ENCODE measurements at regions of chr1 and their contacts with region 1.

Region 1: GRCh38 chr1:169106095-169106920 is at the start of gene ATP1B1:
- DNase-seq: peak; percentile 88
- H3K4me3 ChIP-seq: peak within 1 kb of the TSS; percentile 84 to 89 (median 88)
- H3K27ac ChIP-seq: peak within 1 kb of the TSS; percentile 98
- H3K4me1 ChIP-seq: peaks cover 53% of the 10 kb centered on the region
- H3K27me3 ChIP-seq: no peaks in the 10 kb centered on the region
- CTCF ChIP-seq: peak in 1 of 2 donors; percentile 44
- total RNA-seq, gene ATP1B1: 53.2 to 117 TPM

Region 2: DNA sequence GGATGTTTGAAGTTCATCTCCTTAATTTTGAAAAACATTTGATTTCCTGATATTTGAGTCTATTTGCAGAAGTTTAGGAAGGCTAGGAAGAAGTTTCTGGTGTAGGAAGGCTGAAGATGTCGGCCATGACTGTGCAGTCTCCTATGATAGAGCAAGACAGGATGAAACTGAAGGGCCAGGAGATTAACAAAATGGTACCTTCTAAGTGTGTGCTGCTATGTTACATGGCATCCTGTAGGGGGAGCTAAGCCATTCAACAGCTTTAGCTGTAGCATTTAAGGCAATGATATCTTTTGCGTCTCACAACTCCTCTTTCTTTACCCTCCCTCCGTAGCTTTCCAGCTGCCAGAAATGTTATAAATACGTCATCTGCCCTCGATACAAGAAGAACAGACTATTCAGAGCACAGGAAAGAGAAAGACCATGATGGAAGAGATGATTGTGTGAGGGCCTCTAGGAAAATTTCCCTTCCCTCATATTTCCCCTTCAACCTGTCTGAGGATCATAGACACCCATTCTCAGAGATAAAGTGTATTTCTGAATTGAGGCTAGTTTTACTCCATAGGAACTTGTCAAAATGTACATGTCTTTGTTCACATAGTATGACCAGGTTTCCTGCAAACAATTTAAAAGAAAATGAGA is 468.8 kb before region 1 on chr1:
- CTCF ChIA-PET with region 1: interaction called, 3 read pairs
- dilution Hi-C with region 1: loop called (anchors 25 kb)
- in situ Hi-C with region 1: loop called in 1 of 2 experiments (anchors 10 kb)
- intact Hi-C with region 1: loop called (anchors 1 kb)
- DNase-seq: peak; percentile 39
- H3K4me3 ChIP-seq: no peak overlapping the region
- H3K27ac ChIP-seq: peak overlapping the region; percentile 95
- H3K4me1 ChIP-seq: peaks cover 26% of the 10 kb centered on the region
- H3K27me3 ChIP-seq: no peaks in the 10 kb centered on the region
- CTCF ChIP-seq: peak; percentile 79 to 84

Region 3: GRCh38 chr1:168939548-168940245 is 166.6 kb before region 1 on chr1:
- CTCF ChIA-PET with region 1: no interaction called
- dilution Hi-C with region 1: no loop called
- in situ Hi-C with region 1: no loop called
- intact Hi-C with region 1: no loop called
- DNase-seq: no peak
- H3K4me3 ChIP-seq: no peak overlapping the region
- H3K27ac ChIP-seq: no peak overlapping the region
- H3K4me1 ChIP-seq: no peaks in the 10 kb centered on the region
- H3K27me3 ChIP-seq: no peaks in the 10 kb centered on the region
- CTCF ChIP-seq: no peak

Region 4: GRCh38 chr1:169059421-169059820 is 46.9 kb before region 1 on chr1:
- CTCF ChIA-PET with region 1: no interaction called
- dilution Hi-C with region 1: loop called (anchors 5 kb)
- in situ Hi-C with region 1: no loop called
- intact Hi-C with region 1: no loop called
- DNase-seq: no peak
- H3K4me3 ChIP-seq: no peak overlapping the region
- H3K27ac ChIP-seq: no peak overlapping the region
- H3K4me1 ChIP-seq: no peaks in the 10 kb centered on the region
- H3K27me3 ChIP-seq: no peaks in the 10 kb centered on the region
- CTCF ChIP-seq: no peak

Region 5: GRCh38 chr1:169148472-169149252 is 42.4 kb after region 1 on chr1:
- CTCF ChIA-PET with region 1: no interaction called
- dilution Hi-C with region 1: no loop called
- in situ Hi-C with region 1: no loop called
- intact Hi-C with region 1: no loop called
- DNase-seq: no peak
- H3K4me3 ChIP-seq: no peak overlapping the region
- H3K27ac ChIP-seq: no peak overlapping the region
- H3K4me1 ChIP-seq: no peaks in the 10 kb centered on the region
- H3K27me3 ChIP-seq: no peaks in the 10 kb centered on the region
- CTCF ChIP-seq: no peak

Region 6: DNA sequence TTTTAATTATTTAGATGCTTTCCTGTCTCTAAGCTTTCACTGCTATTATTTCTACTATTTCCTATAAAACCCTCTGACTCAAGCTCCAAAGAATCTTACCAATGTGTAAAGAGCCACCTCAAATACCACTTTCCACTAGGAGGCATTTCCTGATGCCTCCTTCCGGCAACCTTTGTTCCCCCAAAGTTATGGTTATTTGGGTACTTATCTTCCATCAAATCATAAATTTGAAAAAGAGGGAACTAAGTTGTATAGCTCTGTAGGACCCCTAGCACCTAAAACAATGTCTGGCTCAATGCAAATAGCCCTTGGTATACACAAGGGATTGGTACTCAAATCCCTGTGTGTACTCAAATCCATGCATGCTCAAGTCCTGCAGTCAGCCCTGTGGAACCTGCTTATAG is 181.7 kb after region 1 on chr1:
- CTCF ChIA-PET with region 1: no interaction called
- dilution Hi-C with region 1: no loop called
- in situ Hi-C with region 1: no loop called
- intact Hi-C with region 1: no loop called
- DNase-seq: peak; percentile 42
- H3K4me3 ChIP-seq: no peak overlapping the region
- H3K27ac ChIP-seq: no peak overlapping the region
- H3K4me1 ChIP-seq: peaks cover 27% of the 10 kb centered on the region
- H3K27me3 ChIP-seq: no peaks in the 10 kb centered on the region
- CTCF ChIP-seq: no peak

Region 7: DNA sequence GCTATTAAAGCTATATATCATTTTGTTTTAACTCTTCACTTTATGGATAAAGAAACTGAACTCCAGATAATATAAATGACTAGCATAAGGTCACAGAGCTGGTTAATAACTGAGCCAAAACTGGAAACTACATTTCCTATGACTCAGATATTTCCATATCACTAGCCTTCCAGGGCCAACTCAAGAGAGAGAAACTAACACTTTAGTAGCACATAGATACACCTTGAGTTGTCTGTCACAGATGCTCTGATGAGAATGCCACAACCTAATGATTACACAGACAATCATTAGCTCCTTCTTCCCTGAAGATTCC is 220.6 kb after region 1 on chr1:
- CTCF ChIA-PET with region 1: no interaction called
- dilution Hi-C with region 1: no loop called
- in situ Hi-C with region 1: no loop called
- intact Hi-C with region 1: no loop called
- DNase-seq: peak; percentile 63
- H3K4me3 ChIP-seq: no peak overlapping the region
- H3K27ac ChIP-seq: peak overlapping the region; percentile 3
- H3K4me1 ChIP-seq: peaks cover 13% of the 10 kb centered on the region
- H3K27me3 ChIP-seq: no peaks in the 10 kb centered on the region
- CTCF ChIP-seq: no peak

Region 8: GRCh38 chr1:169348383-169349036 is 242.2 kb after region 1 on chr1:
- CTCF ChIA-PET with region 1: interaction called, 3 read pairs
- dilution Hi-C with region 1: no loop called
- in situ Hi-C with region 1: loop called in 1 of 2 experiments (anchors 25 kb)
- intact Hi-C with region 1: loop called (anchors 1 kb)
- DNase-seq: peak; percentile 32
- H3K4me3 ChIP-seq: no peak overlapping the region
- H3K27ac ChIP-seq: no peak overlapping the region
- H3K4me1 ChIP-seq: no peaks in the 10 kb centered on the region
- H3K27me3 ChIP-seq: no peaks in the 10 kb centered on the region
- CTCF ChIP-seq: peak; percentile 55 to 73

Region 9: DNA sequence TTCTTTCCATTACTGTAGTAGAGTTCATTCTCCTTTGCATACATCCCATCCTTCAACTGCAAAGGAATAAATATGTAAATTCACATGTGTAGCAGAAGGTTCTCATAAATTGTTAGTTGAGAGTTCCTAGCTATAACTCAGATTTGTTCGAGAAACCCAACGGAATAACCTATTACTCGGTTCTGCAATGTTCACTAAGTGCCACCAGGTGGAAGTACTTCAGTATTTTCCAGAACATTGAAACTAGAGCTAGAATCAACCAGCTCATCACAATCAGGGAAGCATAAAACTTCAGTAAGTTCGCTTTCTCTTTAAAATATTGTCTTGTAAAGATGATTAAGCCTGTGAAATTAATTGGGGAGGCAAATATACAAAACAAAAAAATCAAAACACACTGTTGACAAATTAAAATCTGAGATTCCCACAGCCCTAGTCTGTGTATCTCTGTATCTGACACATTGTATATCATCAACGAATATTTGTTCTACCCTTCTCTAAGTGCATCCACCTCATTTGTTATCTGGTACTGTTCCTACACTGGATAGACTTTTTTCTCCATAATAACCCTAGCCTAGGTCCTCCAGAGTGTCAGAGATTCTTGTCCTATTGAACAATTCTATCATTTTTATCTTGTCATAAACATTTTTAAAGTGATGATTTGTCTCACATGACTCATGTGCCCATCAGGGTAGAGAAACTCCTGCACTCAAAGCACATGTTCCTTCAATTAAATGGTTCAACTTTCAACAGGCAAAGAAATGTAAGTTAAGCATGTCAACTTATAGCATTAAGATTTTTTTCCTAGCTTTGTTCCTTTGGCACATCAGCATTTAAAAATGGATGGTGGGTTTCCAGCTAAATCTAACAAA is 1861.0 kb after region 1 on chr1:
- CTCF ChIA-PET with region 1: interaction called, 20 read pairs
- dilution Hi-C with region 1: no loop called
- in situ Hi-C with region 1: no loop called
- intact Hi-C with region 1: no loop called
- DNase-seq: peak; percentile 11
- H3K4me3 ChIP-seq: no peak overlapping the region
- H3K27ac ChIP-seq: no peak overlapping the region
- H3K4me1 ChIP-seq: peaks cover 18% of the 10 kb centered on the region
- H3K27me3 ChIP-seq: no peaks in the 10 kb centered on the region
- CTCF ChIP-seq: peak; percentile 54 to 67

Measured in mammary epithelial cell (primary cell).